ENCODE measurements at regions of chr2 and their contacts with region 1.

Region 1: DNA sequence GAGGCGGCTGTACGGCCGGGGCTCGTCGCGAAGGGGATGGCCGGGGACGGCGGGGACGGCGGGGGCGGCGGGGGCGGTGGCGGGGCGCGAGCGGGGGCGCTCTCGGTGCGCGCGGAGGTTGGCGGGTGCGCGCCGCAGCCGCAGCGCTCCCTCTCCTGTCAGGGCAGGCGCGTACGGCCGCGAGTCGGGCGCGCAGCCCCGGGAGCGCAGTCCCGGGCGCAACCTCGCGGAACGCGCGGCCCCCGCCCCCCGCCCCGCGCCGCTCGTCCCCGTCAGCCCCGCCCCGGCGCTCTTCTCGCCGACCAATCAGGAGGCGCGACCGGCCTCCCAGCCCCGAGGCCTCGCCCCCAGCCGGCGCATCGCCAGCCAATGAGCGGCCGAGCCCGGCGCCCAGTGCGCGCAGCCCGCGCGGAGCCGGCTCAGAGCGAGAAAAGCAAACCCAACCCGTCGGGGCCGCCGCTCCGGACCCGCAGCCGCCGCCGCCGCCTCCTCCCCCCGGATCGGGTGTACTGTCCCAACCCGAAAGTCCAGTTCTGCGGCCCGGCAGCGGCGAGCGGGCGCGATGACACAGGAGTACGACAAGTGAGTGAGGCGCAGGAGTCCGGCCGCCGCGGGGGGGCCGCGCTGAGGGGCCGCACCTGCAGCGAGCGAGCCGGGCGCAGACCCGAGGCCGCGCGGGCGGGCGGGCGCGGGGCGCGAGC is at the start of gene GRHL1:
- DNase-seq: peak; percentile 90 to 93
- H3K4me3 ChIP-seq: peak within 1 kb of the TSS; percentile 64 to 68
- H3K27ac ChIP-seq: peak within 1 kb of the TSS in 1 of 2 donors; percentile 35
- H3K4me1 ChIP-seq: peaks cover 0 to 16% (median 9%) of the 10 kb centered on the region in 4 donors
- H3K27me3 ChIP-seq: no peaks in the 10 kb centered on the region
- CTCF ChIP-seq: no peak

Region 2: GRCh38 chr2:9843229-9844035 is 108.0 kb before region 1 on chr2 and contains the start of gene TAF1B:
- intact Hi-C with region 1: loop called (anchors 10 kb)
- DNase-seq: peak; percentile 82 to 88
- H3K4me3 ChIP-seq: peak within 1 kb of the TSS; percentile 85
- H3K27ac ChIP-seq: peak within 1 kb of the TSS; percentile 83 to 89
- H3K4me1 ChIP-seq: peaks cover 0 to 14% (median 10%) of the 10 kb centered on the region in 4 donors
- H3K27me3 ChIP-seq: no peaks in the 10 kb centered on the region
- CTCF ChIP-seq: no peak

Region 3: DNA sequence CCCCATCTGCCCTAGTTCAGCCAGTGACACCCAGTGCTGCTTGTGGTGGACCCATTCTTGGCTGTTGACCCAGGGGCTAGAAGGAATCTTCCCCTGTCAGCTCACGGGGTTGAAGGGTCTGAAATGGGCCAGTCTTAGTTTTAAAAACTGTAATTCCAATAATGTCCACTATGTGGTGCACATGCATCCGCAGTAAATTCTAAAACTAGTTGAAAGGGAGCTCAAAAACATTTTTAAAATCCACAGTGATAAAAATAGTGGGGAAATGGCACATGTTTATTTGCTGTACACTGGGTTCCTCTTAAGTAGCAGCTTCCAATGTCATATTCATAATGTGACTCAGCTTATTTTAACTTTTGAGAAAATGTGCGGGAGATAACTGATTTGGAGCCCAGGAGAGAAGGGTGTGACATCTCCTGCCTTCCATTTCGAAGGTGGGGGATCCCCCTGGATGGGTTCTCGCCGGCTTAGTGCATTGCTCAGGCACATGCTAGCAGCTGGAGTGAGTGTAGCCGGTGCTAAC is 32.9 kb after region 1 on chr2:
- intact Hi-C with region 1: no loop called
- DNase-seq: no peak
- H3K4me3 ChIP-seq: no peak overlapping the region
- H3K27ac ChIP-seq: peak overlapping the region; percentile 67 to 68
- H3K4me1 ChIP-seq: peaks cover 0 to 48% (median 26%) of the 10 kb centered on the region in 4 donors
- H3K27me3 ChIP-seq: no peaks in the 10 kb centered on the region
- CTCF ChIP-seq: peak; percentile 81 to 89

Region 4: DNA sequence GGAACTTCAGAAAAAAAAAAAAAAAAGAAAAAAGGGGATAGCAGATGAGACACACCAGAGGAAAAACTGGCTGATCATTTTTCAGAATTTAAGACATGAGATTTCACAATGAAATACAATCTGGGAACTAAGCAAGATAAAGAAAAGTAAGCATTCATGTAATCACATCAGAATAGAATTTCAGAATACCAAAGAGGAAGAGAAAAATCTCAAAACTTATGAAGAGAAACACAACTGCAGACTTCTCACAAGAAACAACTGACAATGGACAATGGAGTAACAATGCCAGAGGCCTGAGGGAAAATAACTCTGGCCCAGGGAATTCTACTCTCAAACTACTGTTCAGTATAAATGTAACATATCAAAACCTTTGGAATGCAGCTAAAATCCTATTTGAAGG is 157.9 kb after region 1 on chr2:
- intact Hi-C with region 1: no loop called
- DNase-seq: no peak
- H3K4me3 ChIP-seq: no peak overlapping the region
- H3K27ac ChIP-seq: no peak overlapping the region
- H3K4me1 ChIP-seq: no peaks in the 10 kb centered on the region
- H3K27me3 ChIP-seq: no peaks in the 10 kb centered on the region
- CTCF ChIP-seq: no peak